Activated CD4-positive, alpha-beta T cell treated with anti-CD3 and anti-CD28 coated beads, Interleukin-2, amount 10 ng/mL, durations not matched to agents 24 days and 14 days (primary cell): ENCODE measurements at regions of chr16 and their contacts with region 1.

Region 1: GRCh38 chr16:31202414-31203375 is at the start of gene PYCARD:
- DNase-seq: peak; percentile 86
- H3K4me3 Mint-ChIP-seq: peak within 1 kb of the TSS; percentile 89
- H3K27ac Mint-ChIP-seq: peak within 1 kb of the TSS; percentile 87
- H3K4me1 Mint-ChIP-seq: peaks cover 54% of the 10 kb centered on the region
- H3K27me3 Mint-ChIP-seq: peaks cover 1% of the 10 kb centered on the region
- total RNA-seq, gene PYCARD: 15.6 and 17.1 TPM in 2 replicates

Region 2: DNA sequence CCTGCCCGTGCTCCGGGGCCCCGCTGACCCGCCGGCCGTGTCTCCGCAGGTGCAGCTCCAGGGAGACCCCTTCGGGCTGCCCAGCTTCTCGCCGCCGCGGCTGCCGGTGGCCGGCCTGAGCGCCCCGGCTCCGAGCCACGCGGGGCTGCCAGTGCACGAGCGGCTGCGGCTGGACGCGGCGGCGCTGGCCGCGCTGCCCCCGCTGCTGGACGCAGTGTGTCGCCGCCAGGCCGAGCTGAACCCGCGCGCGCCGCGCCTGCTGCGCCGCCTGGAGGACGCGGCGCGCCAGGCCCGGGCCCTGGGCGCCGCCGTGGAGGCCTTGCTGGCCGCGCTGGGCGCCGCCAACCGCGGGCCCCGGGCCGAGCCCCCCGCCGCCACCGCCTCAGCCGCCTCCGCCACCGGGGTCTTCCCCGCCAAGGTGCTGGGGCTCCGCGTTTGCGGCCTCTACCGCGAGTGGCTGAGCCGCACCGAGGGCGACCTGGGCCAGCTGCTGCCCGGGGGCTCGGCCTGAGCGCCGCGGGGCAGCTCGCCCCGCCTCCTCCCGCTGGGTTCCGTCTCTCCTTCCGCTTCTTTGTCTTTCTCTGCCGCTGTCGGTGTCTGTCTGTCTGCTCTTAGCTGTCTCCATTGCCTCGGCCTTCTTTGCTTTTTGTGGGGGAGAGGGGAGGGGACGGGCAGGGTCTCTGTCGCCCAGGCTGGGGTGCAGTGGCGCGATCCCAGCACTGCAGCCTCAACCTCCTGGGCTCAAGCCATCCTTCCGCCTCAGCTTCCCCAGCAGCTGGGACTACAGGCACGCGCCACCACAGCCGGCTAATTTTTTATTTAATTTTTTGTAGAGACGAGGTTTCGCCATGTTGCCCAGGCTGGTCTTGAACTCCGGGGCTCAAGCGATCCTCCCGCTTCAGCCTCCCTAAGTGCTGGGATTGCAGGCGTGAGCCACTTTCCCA is 300.4 kb before region 1 on chr16:
- intact Hi-C with region 1: no loop called
- DNase-seq: peak; percentile 90
- H3K4me3 Mint-ChIP-seq: peak overlapping the region; percentile 92
- H3K27ac Mint-ChIP-seq: peak overlapping the region; percentile 99
- H3K4me1 Mint-ChIP-seq: peaks cover 28% of the 10 kb centered on the region
- H3K27me3 Mint-ChIP-seq: no peaks in the 10 kb centered on the region

Region 3: DNA sequence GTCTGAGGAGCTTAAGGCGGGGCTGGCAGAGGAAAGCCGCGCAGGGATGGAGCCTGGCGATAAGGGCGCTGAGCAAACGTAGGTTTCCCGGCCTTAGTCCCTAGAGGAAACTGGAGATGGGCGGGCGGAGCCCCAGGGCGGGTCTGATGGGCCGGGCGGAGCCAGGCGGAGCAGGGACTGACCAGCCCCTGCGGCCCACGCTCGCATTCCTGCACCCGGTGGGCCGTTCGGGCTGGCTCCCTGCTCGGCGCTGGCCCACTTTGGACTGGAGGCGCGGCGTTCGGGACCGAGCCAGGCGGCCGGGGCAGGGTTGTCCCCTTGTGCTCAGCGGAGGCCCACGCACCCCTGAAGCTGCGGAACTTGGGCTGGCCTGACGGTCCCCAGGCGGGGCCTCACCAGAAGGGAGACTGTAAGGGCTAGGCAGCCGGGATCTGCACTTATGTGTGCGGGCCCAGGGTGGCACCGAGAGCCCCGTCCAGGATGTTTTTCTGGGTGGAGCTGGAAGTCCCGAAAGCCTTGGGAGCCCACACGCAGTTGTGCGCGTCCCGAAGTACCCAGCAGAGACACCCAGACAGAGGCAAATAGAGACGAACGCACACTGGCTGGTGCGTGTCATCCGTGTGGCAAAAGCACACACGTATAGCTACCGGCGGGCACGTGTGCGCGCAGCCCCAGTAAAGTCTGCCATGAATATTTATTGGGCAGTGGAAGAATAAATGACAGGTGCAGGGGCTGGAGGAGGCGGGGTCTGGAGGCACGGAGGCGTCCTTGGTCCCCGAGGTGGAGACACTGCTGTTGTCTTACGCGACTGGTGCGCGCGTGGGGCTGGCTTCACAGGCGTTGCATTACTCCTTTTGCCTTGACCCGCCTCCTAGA is 12.8 kb after region 1 on chr16:
- intact Hi-C with region 1: loop called (anchors 1 kb)
- DNase-seq: peak; percentile 74
- H3K4me3 Mint-ChIP-seq: peak overlapping the region; percentile 84
- H3K27ac Mint-ChIP-seq: peak overlapping the region; percentile 51
- H3K4me1 Mint-ChIP-seq: peaks cover 21% of the 10 kb centered on the region
- H3K27me3 Mint-ChIP-seq: peaks cover 41% of the 10 kb centered on the region

Region 4: DNA sequence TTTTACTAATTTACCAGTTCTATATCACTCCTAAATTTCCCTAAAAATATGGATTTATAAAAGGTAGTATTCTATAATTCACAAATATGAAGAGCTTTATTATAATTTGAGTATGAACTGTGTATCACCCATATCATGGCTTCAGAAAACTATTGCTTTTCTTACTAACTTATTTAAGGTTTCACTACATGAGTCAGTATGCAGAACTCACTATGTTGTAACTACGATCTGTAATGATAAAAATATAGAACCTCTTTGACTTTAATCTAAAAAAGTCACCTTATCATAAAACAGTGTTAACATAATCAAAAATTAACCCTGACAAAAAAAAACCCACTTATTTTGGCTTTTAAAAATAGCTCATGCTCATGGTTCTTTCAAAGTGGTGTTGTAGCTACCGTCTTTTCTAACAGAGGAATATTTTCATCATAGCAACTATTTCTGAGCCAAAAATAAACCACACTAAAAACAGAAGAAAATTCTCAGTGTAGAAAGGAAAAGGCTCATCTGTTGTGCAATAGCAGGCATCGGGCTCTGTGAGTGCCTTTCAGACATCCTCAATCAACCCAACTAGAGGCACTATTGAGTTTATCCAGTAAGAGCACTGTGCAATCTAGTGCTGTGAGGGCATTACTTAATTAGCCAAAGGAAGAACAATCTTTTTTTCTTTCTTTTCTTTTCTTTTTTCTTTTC is 99.2 kb after region 1 on chr16:
- intact Hi-C with region 1: loop called (anchors 1 kb)
- DNase-seq: peak; percentile 64
- H3K4me3 Mint-ChIP-seq: no peak overlapping the region
- H3K27ac Mint-ChIP-seq: peak overlapping the region; percentile 57
- H3K4me1 Mint-ChIP-seq: peaks cover 8% of the 10 kb centered on the region
- H3K27me3 Mint-ChIP-seq: peaks cover 25% of the 10 kb centered on the region

Region 5: GRCh38 chr16:31354394-31355291 is 151.9 kb after region 1 on chr16 and contains the start of gene ITGAX:
- intact Hi-C with region 1: loop called (anchors 1 kb)
- DNase-seq: peak; percentile 92
- H3K4me3 Mint-ChIP-seq: peak within 1 kb of the TSS; percentile 91
- H3K27ac Mint-ChIP-seq: peak within 1 kb of the TSS; percentile 95
- H3K4me1 Mint-ChIP-seq: peaks cover 56% of the 10 kb centered on the region
- H3K27me3 Mint-ChIP-seq: no peaks in the 10 kb centered on the region
- total RNA-seq, gene ITGAX: 44.3 and 45.9 TPM in 2 replicates

Region 6: DNA sequence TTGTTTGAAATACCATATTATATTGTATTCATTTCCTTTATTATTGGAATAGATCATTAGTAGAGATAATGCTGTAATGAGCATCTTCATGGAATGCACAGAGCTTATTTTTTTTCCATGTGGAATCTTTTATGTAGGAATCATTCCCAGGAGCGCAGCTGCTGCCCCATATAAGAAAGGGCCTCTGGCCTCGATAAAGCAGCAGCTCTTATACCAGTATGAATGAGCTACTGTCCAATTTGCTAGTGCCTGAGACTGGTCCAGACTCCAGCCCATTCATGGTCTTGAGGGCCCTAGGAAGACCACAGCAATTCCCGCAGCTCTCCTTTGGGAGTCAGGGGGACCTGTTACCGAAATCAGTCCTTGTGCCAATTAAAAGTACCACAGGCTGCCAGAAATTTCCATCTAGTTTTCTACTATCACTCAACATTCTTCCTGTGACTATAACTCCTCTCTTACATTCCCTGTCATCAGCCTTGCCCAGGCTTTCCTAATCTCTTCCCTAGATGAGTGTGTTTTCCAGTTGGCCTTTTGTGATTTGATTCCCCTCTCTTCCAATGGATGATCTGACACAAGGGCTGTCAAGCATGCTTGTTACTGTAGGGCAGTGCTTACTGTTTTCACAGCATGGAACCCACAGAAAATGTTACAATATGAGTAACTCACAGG is 238.0 kb after region 1 on chr16:
- intact Hi-C with region 1: loop called (anchors 2 kb)
- DNase-seq: no peak
- H3K4me3 Mint-ChIP-seq: no peak overlapping the region
- H3K27ac Mint-ChIP-seq: no peak overlapping the region
- H3K4me1 Mint-ChIP-seq: peaks cover 21% of the 10 kb centered on the region
- H3K27me3 Mint-ChIP-seq: peaks cover 5% of the 10 kb centered on the region